ENCODE measurements at regions of chr18 and their contacts with region 1.

Region 1: DNA sequence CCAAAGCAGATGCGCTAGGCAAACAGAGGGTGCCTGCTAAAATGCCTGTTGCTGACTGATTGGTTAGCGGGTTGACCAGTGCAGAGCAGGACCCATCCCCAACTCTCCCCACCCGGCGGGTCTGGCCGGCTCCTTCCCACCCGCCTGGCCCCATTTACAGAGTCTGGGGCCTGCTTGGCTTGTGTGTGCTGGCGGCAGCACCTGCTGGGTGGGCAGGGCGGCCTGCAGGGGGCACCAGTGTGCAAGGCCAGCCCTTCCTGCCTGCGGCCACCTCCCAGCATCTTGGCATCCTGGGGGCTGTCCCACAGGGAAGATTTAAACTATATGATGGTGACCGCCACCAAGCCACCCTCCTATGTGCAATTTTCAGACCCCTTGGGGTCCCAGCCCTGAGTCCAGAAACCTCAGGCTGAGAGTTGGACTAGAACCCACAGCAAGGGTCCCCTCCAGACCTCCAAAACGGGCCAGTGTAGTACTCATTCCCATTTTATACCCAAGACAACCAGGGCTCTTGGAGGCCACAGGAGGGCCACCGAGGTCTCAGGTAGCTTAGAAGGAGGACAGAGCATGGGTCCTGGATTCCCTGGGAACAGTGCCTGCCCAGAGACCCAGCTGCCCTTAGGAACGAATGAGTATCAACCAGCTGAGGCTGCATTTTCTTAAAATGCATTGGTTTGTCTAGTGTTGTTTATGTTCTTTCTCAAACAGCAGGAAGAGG is 173.6 kb downstream of the SMAD7 start:
- DNase-seq: peak; percentile 80
- H3K4me3 Mint-ChIP-seq: no peak overlapping the region
- H3K27ac Mint-ChIP-seq: no peak overlapping the region
- H3K4me1 Mint-ChIP-seq: peaks cover 7% of the 10 kb centered on the region
- H3K27me3 Mint-ChIP-seq: no peaks in the 10 kb centered on the region

Region 2: DNA sequence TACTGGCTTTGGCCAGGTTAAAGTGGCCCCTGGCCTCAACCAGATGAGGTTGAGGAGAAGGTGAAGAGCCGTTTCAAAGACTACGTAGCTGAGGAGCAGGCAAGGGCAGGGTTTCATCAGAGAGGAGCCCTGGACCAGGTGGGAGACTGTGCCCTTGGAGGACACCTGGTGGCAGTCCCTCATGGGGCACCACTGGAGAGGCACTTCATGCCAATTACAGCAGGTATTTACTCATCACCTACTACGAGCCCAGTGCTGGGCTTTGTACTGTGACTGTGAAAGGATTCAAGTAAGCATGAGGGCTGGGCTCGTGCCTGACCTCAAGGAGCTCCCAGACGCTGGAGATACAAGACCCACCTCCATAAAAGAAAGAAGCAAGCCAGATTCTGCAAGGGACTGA is 136.0 kb after region 1 on chr18:
- CTCF ChIA-PET with region 1: interaction called, 65 read pairs
- POLR2A ChIA-PET with region 1: no interaction called
- intact Hi-C with region 1: loop called (anchors 1 kb)
- DNase-seq: peak; percentile 70
- H3K4me3 Mint-ChIP-seq: no peak overlapping the region
- H3K27ac Mint-ChIP-seq: no peak overlapping the region
- H3K4me1 Mint-ChIP-seq: peaks cover 10% of the 10 kb centered on the region
- H3K27me3 Mint-ChIP-seq: no peaks in the 10 kb centered on the region

Region 3: DNA sequence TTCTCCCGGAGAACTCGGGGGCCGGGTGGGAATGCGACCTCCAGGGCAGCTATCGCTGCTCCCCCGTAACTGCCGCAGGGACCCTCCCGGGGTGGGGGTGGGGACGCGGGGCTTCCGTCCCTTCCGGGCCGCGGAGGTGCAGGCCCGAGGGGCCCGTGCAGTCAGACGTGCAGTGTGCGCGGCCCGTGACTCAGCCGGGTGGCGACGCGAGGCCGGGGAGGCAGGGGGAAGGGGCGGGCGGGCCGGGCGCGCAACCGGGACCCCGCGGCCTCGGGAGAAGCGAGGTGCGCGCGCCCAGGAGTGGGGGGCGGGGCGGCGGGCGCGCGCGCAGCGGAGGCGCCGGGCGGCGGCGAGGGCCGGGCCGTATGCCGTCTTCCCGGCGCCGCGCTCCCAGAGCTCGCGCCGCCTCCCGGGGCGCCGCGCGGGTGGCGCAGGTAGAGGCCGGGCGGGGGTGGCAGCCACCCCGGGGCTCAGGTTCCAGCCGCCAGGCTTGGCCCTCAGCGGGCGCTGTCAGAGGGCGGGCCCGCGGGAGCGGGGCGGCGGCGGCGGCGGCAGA is 198.5 kb after region 1 on chr18:
- CTCF ChIA-PET with region 1: no interaction called
- POLR2A ChIA-PET with region 1: no interaction called
- intact Hi-C with region 1: loop called (anchors 5 kb)
- DNase-seq: peak; percentile 72
- H3K4me3 Mint-ChIP-seq: no peak overlapping the region
- H3K27ac Mint-ChIP-seq: no peak overlapping the region
- H3K4me1 Mint-ChIP-seq: peaks cover 10% of the 10 kb centered on the region
- H3K27me3 Mint-ChIP-seq: peaks cover 13% of the 10 kb centered on the region

Region 4: DNA sequence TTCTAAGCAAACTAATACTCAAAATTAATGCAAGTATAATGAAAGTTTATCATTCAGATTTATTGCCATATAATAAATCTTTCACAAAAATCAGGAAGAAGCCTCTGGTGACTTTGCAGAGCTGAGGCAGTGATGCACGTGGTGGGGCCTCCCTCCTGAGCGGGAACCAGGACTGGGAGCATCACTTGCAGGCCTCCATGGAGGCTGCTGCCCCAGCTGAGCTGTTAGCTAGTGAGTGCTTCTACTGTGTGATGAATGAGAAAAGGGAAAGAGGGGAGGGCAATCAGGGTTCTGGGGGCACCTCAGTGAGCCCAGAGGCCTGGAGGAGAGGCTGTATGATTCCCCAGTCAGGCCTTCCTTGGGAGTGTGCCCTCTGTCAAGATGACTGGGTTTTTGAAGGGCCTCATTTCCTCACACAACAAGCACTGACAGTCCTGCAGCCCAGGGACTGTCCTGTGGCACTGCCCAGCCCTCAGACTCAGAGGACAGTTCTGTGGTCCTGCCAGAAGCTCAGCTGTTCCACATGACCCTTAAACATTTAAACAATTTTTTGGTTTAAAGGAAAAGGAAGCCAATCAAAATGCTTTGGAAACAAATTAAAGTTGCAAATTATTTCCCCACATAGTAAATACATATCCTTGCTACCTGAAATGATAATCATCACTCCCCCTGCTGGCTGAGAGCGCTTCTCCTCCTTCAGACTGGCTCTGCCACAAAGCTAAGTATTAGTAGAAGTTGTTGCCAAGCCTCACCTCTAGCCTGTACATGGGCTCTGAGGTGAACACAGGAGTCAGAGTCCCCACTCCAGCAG is 264.5 kb after region 1 on chr18:
- CTCF ChIA-PET with region 1: interaction called, 13 read pairs
- POLR2A ChIA-PET with region 1: no interaction called
- intact Hi-C with region 1: no loop called
- DNase-seq: peak; percentile 34
- H3K4me3 Mint-ChIP-seq: no peak overlapping the region
- H3K27ac Mint-ChIP-seq: no peak overlapping the region
- H3K4me1 Mint-ChIP-seq: no peaks in the 10 kb centered on the region
- H3K27me3 Mint-ChIP-seq: no peaks in the 10 kb centered on the region

Region 5: DNA sequence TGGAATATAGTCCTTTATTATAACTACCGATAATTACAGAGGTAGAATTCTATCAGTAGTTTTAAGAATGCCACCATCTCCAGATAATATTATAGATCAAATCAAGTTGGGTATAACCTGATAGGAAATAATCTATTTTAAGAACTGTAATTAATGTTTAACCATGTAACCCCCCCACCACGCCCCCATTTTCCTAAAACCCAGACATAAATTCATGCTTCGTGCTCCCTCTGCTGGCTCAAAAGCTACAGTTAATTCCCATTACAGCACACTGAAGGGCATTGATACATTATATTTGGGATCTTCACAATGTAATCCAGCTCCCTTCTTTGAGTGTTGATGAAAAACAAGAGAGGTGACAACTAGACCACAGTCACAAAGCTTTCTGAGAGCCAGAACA is 401.6 kb after region 1 on chr18:
- CTCF ChIA-PET with region 1: no interaction called
- POLR2A ChIA-PET with region 1: no interaction called
- intact Hi-C with region 1: loop called (anchors 5 kb)
- DNase-seq: no peak
- H3K4me3 Mint-ChIP-seq: no peak overlapping the region
- H3K27ac Mint-ChIP-seq: no peak overlapping the region
- H3K4me1 Mint-ChIP-seq: peaks cover 13% of the 10 kb centered on the region
- H3K27me3 Mint-ChIP-seq: no peaks in the 10 kb centered on the region

Measured in activated CD4-positive, alpha-beta memory T cell treated with anti-CD3 and anti-CD28 coated beads for 36 hours (primary cell).